ENCODE measurements at regions of chr6 and their contacts with region 1.

Region 1: GRCh38 chr6:116060572-116061283 is at the start of gene FRK:
- DNase-seq: peak; percentile 77 to 81
- H3K4me3 ChIP-seq: peak within 1 kb of the TSS; percentile 63
- H3K4me3 Mint-ChIP-seq: peak within 1 kb of the TSS; percentile 81
- H3K27ac Mint-ChIP-seq: peak within 1 kb of the TSS; percentile 95
- H3K4me1 ChIP-seq: peaks cover 6% of the 10 kb centered on the region; the same call in 1 of the 2 replicates
- H3K4me1 Mint-ChIP-seq: peaks cover 14% of the 10 kb centered on the region
- H3K27me3 ChIP-seq: no peaks in the 10 kb centered on the region
- H3K27me3 Mint-ChIP-seq: no peaks in the 10 kb centered on the region
- CTCF ChIP-seq: peak; percentile 14 to 40
- total RNA-seq, gene FRK: 7.3 and 8.4 TPM in 2 replicates

Region 2: GRCh38 chr6:116010790-116011401 is 49.8 kb before region 1 on chr6:
- CTCF ChIA-PET with region 1: interaction called, 28 read pairs
- POLR2A ChIA-PET with region 1: no interaction called
- intact Hi-C with region 1: loop called (anchors 1 kb)
- DNase-seq: peak; percentile 58 to 69
- H3K4me3 ChIP-seq: no peak overlapping the region
- H3K4me3 Mint-ChIP-seq: no peak overlapping the region
- H3K27ac Mint-ChIP-seq: no peak overlapping the region
- H3K4me1 ChIP-seq: peaks cover 4% of the 10 kb centered on the region
- H3K4me1 Mint-ChIP-seq: peaks cover 10% of the 10 kb centered on the region
- H3K27me3 ChIP-seq: no peaks in the 10 kb centered on the region
- H3K27me3 Mint-ChIP-seq: no peaks in the 10 kb centered on the region
- CTCF ChIP-seq: peak; percentile 78 to 87

Region 3: DNA sequence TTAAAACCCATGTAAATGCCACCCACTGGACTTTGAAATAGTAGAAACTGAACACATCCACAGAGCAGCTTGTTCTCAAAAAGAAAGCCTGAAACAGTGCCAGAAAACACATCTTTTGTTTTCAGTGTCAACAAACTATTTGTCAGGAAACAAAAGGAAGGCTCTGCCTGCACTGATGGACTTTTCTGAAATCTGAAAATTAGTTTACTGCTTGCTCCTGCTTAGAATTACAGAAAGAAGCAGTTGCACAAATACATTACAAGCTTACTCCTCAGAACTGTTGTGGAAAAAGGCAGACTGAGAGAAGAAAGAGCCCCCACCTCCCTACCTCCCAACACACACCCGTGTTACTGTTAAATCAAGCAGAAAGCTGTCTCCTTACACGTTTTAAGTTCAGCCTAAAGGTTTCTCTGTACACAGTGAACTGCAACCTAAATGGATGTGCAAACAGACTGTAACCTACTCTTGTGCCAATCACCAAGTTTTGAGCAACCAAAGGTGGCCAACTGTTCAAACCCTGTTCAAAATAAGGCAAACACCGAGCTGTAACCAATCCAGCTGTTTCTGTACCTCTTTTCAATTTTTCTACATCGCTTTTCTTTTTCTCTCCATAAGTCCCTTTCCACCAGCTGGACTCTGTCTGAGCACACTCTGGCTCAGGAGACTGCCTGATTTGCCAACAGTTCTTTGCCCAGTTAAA is 43.7 kb before region 1 on chr6:
- CTCF ChIA-PET with region 1: interaction called, 28 read pairs
- POLR2A ChIA-PET with region 1: interaction called, 12 read pairs
- intact Hi-C with region 1: no loop called
- DNase-seq: no peak
- H3K4me3 ChIP-seq: no peak overlapping the region
- H3K4me3 Mint-ChIP-seq: no peak overlapping the region
- H3K27ac Mint-ChIP-seq: peak overlapping the region; percentile 65
- H3K4me1 ChIP-seq: peaks cover 27% of the 10 kb centered on the region
- H3K4me1 Mint-ChIP-seq: peaks cover 32% of the 10 kb centered on the region
- H3K27me3 ChIP-seq: no peaks in the 10 kb centered on the region
- H3K27me3 Mint-ChIP-seq: no peaks in the 10 kb centered on the region
- CTCF ChIP-seq: no peak

Region 4: DNA sequence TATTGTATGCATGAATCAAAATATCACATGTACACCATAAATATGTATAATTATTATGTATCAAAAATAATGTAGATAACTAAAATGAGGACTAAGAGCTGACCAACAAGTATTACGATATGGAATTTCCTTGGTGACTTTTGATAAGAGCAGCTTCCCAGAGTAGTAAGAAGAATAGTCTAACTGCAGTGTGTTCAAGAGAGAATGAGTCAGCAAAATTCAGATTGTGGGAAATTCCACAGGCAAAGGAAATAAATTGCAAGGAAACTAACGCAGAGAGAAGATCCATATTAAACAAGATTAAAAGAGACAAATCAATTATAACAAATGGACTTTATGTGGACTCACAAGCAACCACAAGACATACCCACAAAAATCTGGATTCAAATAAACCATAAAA is 26.4 kb before region 1 on chr6:
- CTCF ChIA-PET with region 1: interaction called, 3 read pairs
- POLR2A ChIA-PET with region 1: interaction called, 13 read pairs
- intact Hi-C with region 1: no loop called
- DNase-seq: no peak
- H3K4me3 ChIP-seq: no peak overlapping the region
- H3K4me3 Mint-ChIP-seq: no peak overlapping the region
- H3K27ac Mint-ChIP-seq: peak overlapping the region; percentile 40
- H3K4me1 ChIP-seq: peaks cover 41% of the 10 kb centered on the region
- H3K4me1 Mint-ChIP-seq: peaks cover 23% of the 10 kb centered on the region
- H3K27me3 ChIP-seq: no peaks in the 10 kb centered on the region
- H3K27me3 Mint-ChIP-seq: no peaks in the 10 kb centered on the region
- CTCF ChIP-seq: no peak

Region 5: DNA sequence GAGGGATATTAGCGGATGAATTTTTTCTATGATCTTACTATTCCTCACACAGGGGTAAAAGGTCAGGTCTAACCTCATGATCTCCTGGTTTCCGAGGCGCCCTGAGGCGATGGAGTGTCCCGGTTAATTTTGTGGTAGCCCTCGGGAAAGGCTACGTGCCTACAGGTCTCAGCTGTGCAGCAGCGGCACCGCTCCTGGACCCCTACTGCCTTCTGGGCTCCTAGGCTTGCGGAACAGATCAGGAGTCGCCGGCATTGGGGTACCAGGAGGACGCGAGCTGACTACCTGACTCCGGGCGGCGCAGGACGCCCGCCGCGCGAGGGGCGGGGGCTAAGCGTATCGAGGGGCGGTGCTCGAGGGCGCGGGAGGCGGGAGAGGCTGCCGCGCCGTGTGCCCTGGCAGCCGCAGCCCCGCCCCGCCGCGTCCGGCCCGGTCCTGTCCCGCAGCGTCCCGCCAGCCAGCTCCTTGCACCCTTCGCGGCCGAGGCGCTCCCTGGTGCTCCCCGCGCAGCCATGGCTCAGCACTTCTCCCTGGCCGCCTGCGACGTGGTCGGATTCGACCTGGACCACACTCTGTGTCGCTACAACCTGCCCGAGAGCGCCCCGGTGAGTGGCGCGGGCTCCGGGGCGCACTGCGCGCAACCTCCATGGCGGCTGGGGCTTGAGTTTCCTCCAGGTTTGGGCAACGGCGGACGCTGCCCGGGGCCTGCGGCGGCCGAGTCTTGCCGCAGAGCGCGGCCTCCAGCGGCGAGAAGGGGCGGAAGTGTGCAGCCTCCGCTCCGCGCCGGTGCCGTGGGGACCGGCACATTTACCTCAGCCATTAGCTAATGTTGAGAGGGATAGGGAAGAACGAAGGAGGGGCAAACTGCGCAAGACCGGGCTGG is 39.9 kb after region 1 on chr6 and contains the start of gene NT5DC1:
- CTCF ChIA-PET with region 1: interaction called, 10 read pairs
- POLR2A ChIA-PET with region 1: interaction called, 19 read pairs
- intact Hi-C with region 1: loop called (anchors 1 kb)
- DNase-seq: peak; percentile 87 to 90
- H3K4me3 ChIP-seq: peak within 1 kb of the TSS; percentile 73
- H3K4me3 Mint-ChIP-seq: peak within 1 kb of the TSS; percentile 94
- H3K27ac Mint-ChIP-seq: peak within 1 kb of the TSS; percentile 87
- H3K4me1 ChIP-seq: peaks cover 7% of the 10 kb centered on the region; the same call in 1 of the 2 replicates
- H3K4me1 Mint-ChIP-seq: peaks cover 19% of the 10 kb centered on the region
- H3K27me3 ChIP-seq: no peaks in the 10 kb centered on the region
- H3K27me3 Mint-ChIP-seq: no peaks in the 10 kb centered on the region
- CTCF ChIP-seq: peak; percentile 16 to 29
- total RNA-seq, gene NT5DC1: 54.3 and 55.0 TPM in 2 replicates

Measured in Caco-2 (cell line).